Colonic mucosa (tissue), 4 donors: ENCODE measurements at regions of chr15 and their contacts with region 1.

Region 1: GRCh38 chr15:82749951-82750830 is 40.5 kb upstream of the AP3B2 start:
- DNase-seq: peak; percentile 95
- H3K4me3 ChIP-seq: peak overlapping the region; percentile 69
- H3K27ac ChIP-seq: peak overlapping the region; percentile 80
- H3K4me1 ChIP-seq: no peaks in the 10 kb centered on the region
- H3K27me3 ChIP-seq: no peaks in the 10 kb centered on the region
- CTCF ChIP-seq: no peak

Region 2: DNA sequence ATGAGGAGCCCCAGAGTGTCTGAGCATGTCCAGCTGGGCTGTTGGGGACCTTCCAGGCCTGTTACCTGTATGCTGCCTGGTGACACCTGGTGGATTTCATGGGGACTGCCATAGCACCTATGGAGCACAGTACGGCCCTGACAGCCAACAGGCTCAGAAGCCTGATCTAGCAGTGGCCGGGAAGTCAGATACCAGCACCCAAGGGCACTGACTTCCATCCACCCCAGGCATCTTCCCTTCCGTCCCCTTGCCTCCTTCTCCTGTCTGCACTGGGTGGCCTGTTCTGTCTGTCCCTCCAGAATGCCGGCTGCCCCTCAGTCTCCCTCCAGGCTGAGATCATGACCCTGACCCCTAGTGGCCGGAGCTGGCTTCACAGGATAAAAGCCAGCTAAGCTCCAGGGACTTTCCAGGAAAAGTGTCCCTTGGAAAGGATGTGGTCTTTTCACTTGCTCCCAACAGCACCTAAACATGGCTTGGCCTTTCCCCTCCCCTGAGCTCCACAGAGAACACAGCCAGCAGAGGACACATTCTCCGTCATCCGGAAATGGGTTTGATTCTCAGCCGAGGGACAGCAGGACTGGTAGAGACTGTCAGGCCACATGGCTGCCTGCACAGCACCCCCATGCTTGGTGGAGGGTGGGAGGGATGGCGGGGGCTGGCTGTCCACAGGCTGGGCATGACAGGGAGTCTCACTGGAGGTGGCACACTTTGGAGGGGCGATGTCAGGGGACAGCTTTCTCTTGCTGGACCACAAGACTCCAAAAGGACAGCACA is 219.4 kb before region 1 on chr15:
- intact Hi-C with region 1: loop called (anchors 10 kb)
- DNase-seq: peak; percentile 80
- H3K4me3 ChIP-seq: peak overlapping the region; percentile 31
- H3K27ac ChIP-seq: no peak overlapping the region
- H3K4me1 ChIP-seq: no peaks in the 10 kb centered on the region
- H3K27me3 ChIP-seq: no peaks in the 10 kb centered on the region
- CTCF ChIP-seq: peak; percentile 80

Region 3: GRCh38 chr15:82803793-82804574 is 53.8 kb after region 1 on chr15:
- intact Hi-C with region 1: loop called (anchors 5 kb)
- DNase-seq: no peak
- H3K4me3 ChIP-seq: no peak overlapping the region
- H3K27ac ChIP-seq: no peak overlapping the region
- H3K4me1 ChIP-seq: no peaks in the 10 kb centered on the region
- H3K27me3 ChIP-seq: no peaks in the 10 kb centered on the region
- CTCF ChIP-seq: no peak

Region 4: GRCh38 chr15:83262594-83263315 is 512.6 kb after region 1 on chr15:
- intact Hi-C with region 1: no loop called
- DNase-seq: no peak
- H3K4me3 ChIP-seq: no peak overlapping the region
- H3K27ac ChIP-seq: no peak overlapping the region
- H3K4me1 ChIP-seq: no peaks in the 10 kb centered on the region
- H3K27me3 ChIP-seq: no peaks in the 10 kb centered on the region
- CTCF ChIP-seq: no peak